Cardiac septum (tissue), 1 donor: ENCODE measurements at regions of chr2 and their contacts with region 1.

Region 1: DNA sequence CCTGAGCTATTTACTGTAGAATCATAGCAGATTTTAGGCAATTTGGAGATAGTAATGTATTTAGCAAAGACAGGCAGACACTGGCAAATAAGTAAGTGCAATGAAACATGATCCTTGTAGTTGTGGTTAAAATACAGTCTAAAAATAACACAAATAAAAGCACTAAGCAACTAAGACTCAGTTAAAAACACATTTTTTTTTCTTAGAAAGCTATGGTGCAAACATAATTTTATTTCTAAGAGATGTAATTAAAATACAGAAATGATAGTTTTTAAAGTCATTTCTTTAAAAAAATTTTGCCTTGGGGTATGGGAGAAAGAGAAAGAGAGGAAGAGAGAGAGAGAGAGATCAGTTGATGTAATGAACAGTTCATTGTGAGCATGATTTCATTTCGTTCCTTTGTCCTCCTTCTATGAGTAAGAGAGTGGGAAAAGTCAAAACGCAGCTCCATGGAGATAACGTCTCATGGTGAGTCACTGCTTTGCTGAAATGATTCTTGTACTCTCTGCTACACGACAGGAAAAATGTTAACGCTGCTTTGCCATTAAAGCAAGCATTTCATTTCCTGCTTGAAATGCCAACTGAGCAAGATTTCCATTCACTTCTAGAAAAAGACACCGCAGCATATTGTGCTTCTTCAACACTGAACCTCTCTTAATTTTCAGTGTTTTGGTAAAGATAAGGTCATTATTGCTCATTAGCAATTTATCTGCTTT is 61.3 kb upstream of the PGAP1 start:
- DNase-seq: no peak

Region 2: GRCh38 chr2:196613302-196613701 is 374.5 kb before region 1 on chr2:
- intact Hi-C with region 1: no loop called
- DNase-seq: no peak

Region 3: GRCh38 chr2:196926562-196927375 is 61.0 kb before region 1 on chr2 and contains the start of gene PGAP1:
- intact Hi-C with region 1: loop called (anchors 5 kb)
- DNase-seq: peak; percentile 96
- total RNA-seq, gene PGAP1: 7.7 TPM